ENCODE measurements at regions of chr12 and their contacts with region 1.

Region 1: GRCh38 chr12:104276273-104277131 is 27.0 kb upstream of the EID3 start:
- DNase-seq: peak; percentile 95
- ATAC-seq: peak; percentile 44
- H3K4me3 ChIP-seq: peak overlapping the region; percentile 64
- H3K27ac ChIP-seq: peak overlapping the region; percentile 99
- H3K4me1 ChIP-seq: peaks cover 75% of the 10 kb centered on the region
- H3K27me3 ChIP-seq: no peaks in the 10 kb centered on the region
- CTCF ChIP-seq: no peak

Region 2: DNA sequence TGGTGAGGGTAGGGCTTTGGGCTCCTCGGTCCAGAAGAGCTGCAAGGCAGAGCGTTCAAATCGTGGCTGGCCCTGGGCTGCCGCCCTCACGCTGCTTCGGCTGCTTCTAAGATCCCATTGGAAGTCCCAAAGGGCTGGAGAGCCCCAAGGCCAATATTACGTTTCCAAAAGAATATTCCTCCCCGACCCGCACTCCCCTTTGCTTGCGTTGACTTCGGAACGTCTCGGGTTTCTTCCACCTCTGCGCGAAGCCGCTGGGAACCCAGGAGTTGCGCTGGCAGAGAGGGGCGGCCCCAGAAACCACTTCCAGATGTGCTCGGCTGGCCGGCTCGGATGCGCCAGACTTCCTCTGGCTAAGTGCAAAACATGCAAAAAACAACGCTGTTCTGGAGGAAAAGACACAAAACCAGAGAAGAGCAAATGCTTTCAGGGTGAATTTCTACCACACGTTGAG is 226.6 kb before region 1 on chr12 and contains the start of gene GLT8D2:
- CTCF ChIA-PET with region 1: no interaction called
- POLR2A ChIA-PET with region 1: no interaction called
- intact Hi-C with region 1: no loop called
- DNase-seq: peak; percentile 61
- ATAC-seq: peak; percentile 86
- H3K4me3 ChIP-seq: peak within 1 kb of the TSS; percentile 76
- H3K27ac ChIP-seq: no peak within 1 kb of the TSS
- H3K4me1 ChIP-seq: peaks cover 15% of the 10 kb centered on the region
- H3K27me3 ChIP-seq: no peaks in the 10 kb centered on the region
- CTCF ChIP-seq: no peak
- total RNA-seq, gene GLT8D2: 1.6 TPM in 2 replicates

Region 3: GRCh38 chr12:104226672-104227071 is 49.8 kb before region 1 on chr12:
- CTCF ChIA-PET with region 1: interaction called, 6 read pairs
- POLR2A ChIA-PET with region 1: interaction called, 6 read pairs
- intact Hi-C with region 1: loop called (anchors 1 kb)
- DNase-seq: peak; percentile 89
- ATAC-seq: peak; percentile 91
- H3K4me3 ChIP-seq: no peak overlapping the region; the same call in 1 of the 2 replicates
- H3K27ac ChIP-seq: peak overlapping the region; percentile 64
- H3K4me1 ChIP-seq: peaks cover 29% of the 10 kb centered on the region
- H3K27me3 ChIP-seq: no peaks in the 10 kb centered on the region
- CTCF ChIP-seq: no peak

Region 4: DNA sequence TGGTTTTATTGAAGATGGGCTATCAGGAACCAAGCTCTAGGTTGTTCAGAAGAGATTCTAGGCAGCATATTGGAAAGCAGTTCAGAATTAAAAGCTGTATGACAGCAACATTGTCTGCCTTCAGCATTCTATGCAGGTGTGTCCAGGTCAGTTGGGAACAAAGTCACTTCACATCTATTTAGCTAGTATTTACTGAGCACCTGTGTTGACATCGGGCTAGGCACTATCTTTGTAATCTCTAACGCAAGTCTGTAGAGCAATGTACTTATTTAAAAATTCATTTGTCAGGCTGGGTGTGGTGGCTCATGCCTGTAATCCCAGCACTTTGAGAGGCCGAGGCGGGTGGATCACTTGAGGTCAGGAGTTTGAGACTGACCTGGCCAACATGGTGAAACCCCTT is 20.2 kb after region 1 on chr12:
- CTCF ChIA-PET with region 1: interaction called, 3 read pairs
- POLR2A ChIA-PET with region 1: interaction called, 19 read pairs
- intact Hi-C with region 1: no loop called
- DNase-seq: no peak
- ATAC-seq: no peak
- H3K4me3 ChIP-seq: no peak overlapping the region
- H3K27ac ChIP-seq: no peak overlapping the region
- H3K4me1 ChIP-seq: peaks cover 73% of the 10 kb centered on the region
- H3K27me3 ChIP-seq: no peaks in the 10 kb centered on the region
- CTCF ChIP-seq: no peak

Region 5: DNA sequence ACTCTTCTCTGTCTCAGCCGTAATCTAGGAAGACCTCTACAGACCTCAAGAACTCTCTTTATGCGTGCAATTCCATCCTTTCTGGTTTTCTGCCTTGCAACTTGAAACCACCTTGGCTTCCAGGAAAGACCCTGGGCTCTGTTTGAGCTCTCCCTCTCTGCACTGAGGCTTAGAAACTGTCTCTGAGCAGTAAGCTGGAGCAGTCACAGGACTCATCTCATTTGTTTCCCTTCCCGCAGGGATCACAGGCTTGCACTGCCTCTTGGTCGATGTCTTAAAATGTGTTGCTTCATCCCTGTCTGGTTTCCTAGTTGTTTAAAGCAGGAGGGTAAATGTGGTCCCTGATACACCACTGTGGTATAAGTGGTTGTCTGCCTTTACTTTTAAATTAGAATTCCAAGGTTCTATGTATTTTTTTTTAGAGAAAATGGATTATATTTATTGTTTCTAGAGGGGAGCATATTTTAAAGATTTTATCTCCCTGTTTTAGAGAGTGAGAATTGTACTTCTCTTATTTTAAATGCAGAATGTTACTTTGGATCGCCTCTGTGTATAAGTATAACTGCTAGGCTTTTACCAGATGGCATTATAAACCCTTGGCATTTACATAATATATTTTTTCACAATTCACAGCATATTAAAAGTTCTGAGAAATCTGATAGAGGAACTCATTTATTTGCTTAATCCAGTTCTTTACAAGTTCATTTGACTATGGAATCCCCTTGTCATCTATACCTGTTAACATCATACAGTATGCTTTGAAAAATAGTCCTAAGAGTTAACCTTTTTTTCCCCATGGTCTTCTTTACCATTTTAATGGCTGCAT is 53.4 kb after region 1 on chr12:
- CTCF ChIA-PET with region 1: no interaction called
- POLR2A ChIA-PET with region 1: no interaction called
- intact Hi-C with region 1: no loop called
- DNase-seq: no peak
- ATAC-seq: peak; percentile 27
- H3K4me3 ChIP-seq: no peak overlapping the region
- H3K27ac ChIP-seq: no peak overlapping the region
- H3K4me1 ChIP-seq: no peaks in the 10 kb centered on the region
- H3K27me3 ChIP-seq: no peaks in the 10 kb centered on the region
- CTCF ChIP-seq: no peak